Activated B cell treated with CpG ODN at 0.5 μM for 24 hours (primary cell): ENCODE measurements at regions of chr11 and their contacts with region 1.

Region 1: GRCh38 chr11:128714881-128715280 is 21.0 kb downstream of the FLI1 start:
- DNase-seq: no peak
- ATAC-seq: no peak
- H3K4me3 Mint-ChIP-seq: no peak overlapping the region
- H3K27ac Mint-ChIP-seq: peak overlapping the region; percentile 98
- H3K4me1 Mint-ChIP-seq: peaks cover 97% of the 10 kb centered on the region
- H3K27me3 Mint-ChIP-seq: no peaks in the 10 kb centered on the region
- CTCF ChIP-seq: no peak

Region 2: GRCh38 chr11:127496165-127496564 is 1218.7 kb before region 1 on chr11:
- CTCF ChIA-PET with region 1: no interaction called
- POLR2A ChIA-PET with region 1: no interaction called
- intact Hi-C with region 1: no loop called
- DNase-seq: no peak
- ATAC-seq: no peak
- H3K4me3 Mint-ChIP-seq: no peak overlapping the region
- H3K27ac Mint-ChIP-seq: no peak overlapping the region
- H3K4me1 Mint-ChIP-seq: no peaks in the 10 kb centered on the region
- H3K27me3 Mint-ChIP-seq: no peaks in the 10 kb centered on the region
- CTCF ChIP-seq: no peak

Region 3: DNA sequence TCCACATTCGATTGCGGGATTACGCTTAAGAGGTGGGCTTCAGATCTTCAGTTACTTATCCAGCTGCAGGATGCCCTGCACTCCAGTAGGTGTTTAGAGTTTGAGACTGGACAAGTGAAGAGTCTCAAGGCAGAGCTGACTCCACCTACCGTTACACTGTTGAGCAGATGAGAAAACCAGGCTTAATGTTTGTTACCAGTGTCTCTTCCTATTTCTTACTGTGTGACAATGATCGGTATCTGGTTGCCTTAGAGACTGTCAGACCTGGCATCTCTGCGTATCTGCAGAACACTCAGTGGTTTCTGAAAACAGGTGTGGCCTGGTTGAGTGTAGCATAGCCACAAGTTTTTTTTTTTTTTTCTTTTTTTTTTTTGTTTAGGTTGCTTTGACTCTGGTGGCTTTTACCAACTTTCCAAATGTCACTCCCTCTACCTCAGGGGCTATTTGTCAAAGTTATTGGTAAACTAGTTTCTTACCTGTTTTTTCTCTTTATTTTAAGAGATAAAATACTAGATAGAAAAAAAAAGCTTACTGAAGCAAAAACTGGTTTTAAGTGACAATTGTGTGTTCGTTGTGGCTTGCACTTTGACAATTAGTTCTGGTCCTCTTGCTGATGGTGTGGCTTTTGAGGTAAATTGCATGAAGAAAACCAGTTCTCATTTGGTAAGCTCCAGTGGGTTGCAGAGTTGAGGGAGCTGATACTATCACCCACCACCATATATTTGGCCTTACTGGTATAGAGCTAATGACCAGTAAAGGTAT is 412.3 kb before region 1 on chr11:
- CTCF ChIA-PET with region 1: no interaction called
- POLR2A ChIA-PET with region 1: no interaction called
- intact Hi-C with region 1: no loop called
- DNase-seq: no peak
- ATAC-seq: peak; percentile 89
- H3K4me3 Mint-ChIP-seq: peak overlapping the region; percentile 21
- H3K27ac Mint-ChIP-seq: peak overlapping the region; percentile 81
- H3K4me1 Mint-ChIP-seq: peaks cover 73% of the 10 kb centered on the region
- H3K27me3 Mint-ChIP-seq: no peaks in the 10 kb centered on the region
- CTCF ChIP-seq: no peak

Region 4: GRCh38 chr11:128701086-128701485 is 13.8 kb before region 1 on chr11:
- CTCF ChIA-PET with region 1: interaction called, 3 read pairs
- POLR2A ChIA-PET with region 1: interaction called, 43 read pairs
- intact Hi-C with region 1: loop called (anchors 1 kb)
- DNase-seq: no peak
- ATAC-seq: no peak
- H3K4me3 Mint-ChIP-seq: peak overlapping the region; percentile 1
- H3K27ac Mint-ChIP-seq: peak overlapping the region; percentile 64
- H3K4me1 Mint-ChIP-seq: peaks cover 96% of the 10 kb centered on the region
- H3K27me3 Mint-ChIP-seq: no peaks in the 10 kb centered on the region
- CTCF ChIP-seq: no peak

Region 5: GRCh38 chr11:128733440-128734102 is 18.7 kb after region 1 on chr11:
- CTCF ChIA-PET with region 1: interaction called, 5 read pairs
- POLR2A ChIA-PET with region 1: interaction called, 58 read pairs
- intact Hi-C with region 1: loop called (anchors 1 kb)
- DNase-seq: no peak
- ATAC-seq: peak; percentile 17
- H3K4me3 Mint-ChIP-seq: peak overlapping the region; percentile 71
- H3K27ac Mint-ChIP-seq: peak overlapping the region; percentile 98
- H3K4me1 Mint-ChIP-seq: peaks cover 99% of the 10 kb centered on the region
- H3K27me3 Mint-ChIP-seq: no peaks in the 10 kb centered on the region
- CTCF ChIP-seq: no peak

Region 6: DNA sequence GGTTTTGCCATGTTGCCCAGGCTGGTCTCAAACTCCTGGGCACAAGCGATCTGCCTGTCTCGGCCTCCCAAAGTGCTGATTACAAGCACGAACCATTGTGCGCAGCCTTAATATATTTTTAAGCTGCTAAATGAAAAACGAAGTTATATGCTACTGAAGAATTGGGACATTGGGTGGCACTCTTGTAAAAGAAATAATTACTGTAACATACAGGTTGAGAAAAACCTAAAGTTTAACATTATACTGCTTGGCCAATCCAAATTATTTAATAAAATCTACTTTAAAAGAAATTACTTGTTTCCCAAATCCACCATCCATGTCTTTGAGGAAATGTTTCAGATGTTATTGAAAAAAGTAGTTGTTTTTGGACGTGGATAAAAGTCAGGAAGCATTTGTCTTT is 515.1 kb after region 1 on chr11:
- CTCF ChIA-PET with region 1: no interaction called
- POLR2A ChIA-PET with region 1: no interaction called
- intact Hi-C with region 1: no loop called
- DNase-seq: no peak
- ATAC-seq: no peak
- H3K4me3 Mint-ChIP-seq: no peak overlapping the region
- H3K27ac Mint-ChIP-seq: no peak overlapping the region
- H3K4me1 Mint-ChIP-seq: no peaks in the 10 kb centered on the region
- H3K27me3 Mint-ChIP-seq: no peaks in the 10 kb centered on the region
- CTCF ChIP-seq: no peak